ENCODE measurements at regions of chr17 and their contacts with region 1.

Region 1: GRCh38 chr17:37838276-37838675 is 85.9 kb upstream of the TBC1D3K start:
- DNase-seq: no peak

Region 2: GRCh38 chr17:37820313-37820994 is 17.8 kb before region 1 on chr17:
- CTCF ChIA-PET with region 1: interaction called, 10 read pairs
- POLR2A ChIA-PET with region 1: no interaction called
- DNase-seq: no peak